GM13977 (cell line): ENCODE measurements at regions of chr22 and their contacts with region 1.

Region 1: DNA sequence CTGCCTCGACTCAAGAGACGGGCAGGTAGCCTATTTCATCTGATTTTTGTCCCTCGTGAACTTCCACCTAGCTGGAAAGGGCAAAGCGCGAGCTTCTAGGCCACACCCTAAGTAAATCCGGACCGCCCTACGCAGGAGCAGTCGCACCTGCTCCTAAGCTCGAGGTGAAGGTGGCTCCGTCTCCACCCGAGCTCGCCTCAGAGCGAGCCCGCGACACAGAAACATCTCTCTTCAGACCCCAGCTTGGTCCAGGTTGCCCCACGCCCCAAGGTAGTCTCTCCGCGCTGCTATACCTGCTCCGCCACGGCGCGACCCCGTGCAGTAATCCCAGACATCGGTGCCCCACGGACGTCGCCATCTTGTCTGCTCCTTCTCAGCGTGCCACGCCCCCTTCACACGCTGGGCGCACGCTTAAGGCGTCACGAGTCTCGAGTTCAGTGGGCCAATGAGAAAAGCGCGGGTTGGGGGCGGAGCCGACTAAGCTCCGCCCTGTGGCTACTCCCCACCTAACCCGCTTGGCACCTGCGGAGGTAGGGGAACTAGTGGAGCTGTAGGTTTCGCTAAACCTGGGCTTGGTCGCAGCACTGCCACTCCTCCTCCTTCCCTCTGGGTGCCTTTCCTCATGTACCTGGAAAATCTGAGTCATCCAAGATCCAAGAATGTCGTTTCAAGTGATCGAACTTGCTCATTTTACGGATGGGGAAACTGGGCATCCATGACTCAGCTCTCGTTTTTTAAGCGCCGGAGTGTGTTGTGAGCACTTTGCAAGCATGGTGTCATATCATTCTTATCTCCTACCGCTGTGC is at the start of gene PISD:
- DNase-seq: peak; percentile 93
- CTCF ChIP-seq: no peak

Region 2: GRCh38 chr22:31943976-31944699 is 282.1 kb after region 1 on chr22 and contains the start of gene YWHAH:
- in situ Hi-C with region 1: loop called (anchors 10 kb)
- DNase-seq: peak; percentile 99
- CTCF ChIP-seq: no peak